ENCODE measurements at regions of chr11 and their contacts with region 1.

Region 1: GRCh38 chr11:2532704-2533586 is 88.1 kb downstream of the KCNQ1 start:
- DNase-seq: peak; percentile 90
- H3K4me3 Mint-ChIP-seq: peak overlapping the region; percentile 49
- H3K27ac Mint-ChIP-seq: no peak overlapping the region
- H3K4me1 Mint-ChIP-seq: peaks cover 13% of the 10 kb centered on the region
- H3K27me3 Mint-ChIP-seq: no peaks in the 10 kb centered on the region

Region 2: GRCh38 chr11:2428322-2428795 is 104.6 kb before region 1 on chr11:
- CTCF ChIA-PET with region 1: interaction called, 33 read pairs
- POLR2A ChIA-PET with region 1: interaction called, 3 read pairs
- DNase-seq: peak; percentile 83
- H3K4me3 Mint-ChIP-seq: no peak overlapping the region
- H3K27ac Mint-ChIP-seq: no peak overlapping the region
- H3K4me1 Mint-ChIP-seq: no peaks in the 10 kb centered on the region
- H3K27me3 Mint-ChIP-seq: no peaks in the 10 kb centered on the region

Region 3: GRCh38 chr11:2666401-2666741 is 133.4 kb after region 1 on chr11:
- CTCF ChIA-PET with region 1: no interaction called
- POLR2A ChIA-PET with region 1: no interaction called
- DNase-seq: no peak
- H3K4me3 Mint-ChIP-seq: no peak overlapping the region
- H3K27ac Mint-ChIP-seq: no peak overlapping the region
- H3K4me1 Mint-ChIP-seq: no peaks in the 10 kb centered on the region
- H3K27me3 Mint-ChIP-seq: no peaks in the 10 kb centered on the region

Region 4: DNA sequence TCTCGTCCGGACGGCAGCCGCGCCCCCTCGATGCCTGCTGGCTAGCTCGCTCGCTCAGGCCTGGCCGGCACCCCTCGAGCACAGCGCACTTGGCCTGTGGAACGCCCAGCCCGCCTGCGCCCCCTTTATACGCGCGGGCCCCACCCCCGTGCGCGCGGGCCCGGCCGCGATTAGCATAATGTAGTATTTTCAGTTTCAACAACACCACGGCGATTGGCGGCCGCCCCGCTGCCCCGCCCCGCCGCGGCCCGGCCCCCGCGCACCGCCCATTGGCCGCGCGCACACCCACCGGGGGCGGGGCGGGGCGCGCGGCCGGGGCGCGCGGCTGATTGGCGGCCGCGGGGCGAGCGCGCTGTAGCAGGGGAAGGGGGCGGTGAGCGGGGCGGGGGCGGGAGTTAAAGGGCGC is 352.7 kb after region 1 on chr11 and contains the start of gene CDKN1C:
- CTCF ChIA-PET with region 1: interaction called, 216 read pairs
- POLR2A ChIA-PET with region 1: interaction called, 10 read pairs
- DNase-seq: peak; percentile 84
- H3K4me3 Mint-ChIP-seq: peak within 1 kb of the TSS; percentile 84
- H3K27ac Mint-ChIP-seq: no peak within 1 kb of the TSS
- H3K4me1 Mint-ChIP-seq: peaks cover 11% of the 10 kb centered on the region
- H3K27me3 Mint-ChIP-seq: peaks cover 38% of the 10 kb centered on the region
- total RNA-seq, gene CDKN1C: 0.55 to 0.60 TPM

Region 5: DNA sequence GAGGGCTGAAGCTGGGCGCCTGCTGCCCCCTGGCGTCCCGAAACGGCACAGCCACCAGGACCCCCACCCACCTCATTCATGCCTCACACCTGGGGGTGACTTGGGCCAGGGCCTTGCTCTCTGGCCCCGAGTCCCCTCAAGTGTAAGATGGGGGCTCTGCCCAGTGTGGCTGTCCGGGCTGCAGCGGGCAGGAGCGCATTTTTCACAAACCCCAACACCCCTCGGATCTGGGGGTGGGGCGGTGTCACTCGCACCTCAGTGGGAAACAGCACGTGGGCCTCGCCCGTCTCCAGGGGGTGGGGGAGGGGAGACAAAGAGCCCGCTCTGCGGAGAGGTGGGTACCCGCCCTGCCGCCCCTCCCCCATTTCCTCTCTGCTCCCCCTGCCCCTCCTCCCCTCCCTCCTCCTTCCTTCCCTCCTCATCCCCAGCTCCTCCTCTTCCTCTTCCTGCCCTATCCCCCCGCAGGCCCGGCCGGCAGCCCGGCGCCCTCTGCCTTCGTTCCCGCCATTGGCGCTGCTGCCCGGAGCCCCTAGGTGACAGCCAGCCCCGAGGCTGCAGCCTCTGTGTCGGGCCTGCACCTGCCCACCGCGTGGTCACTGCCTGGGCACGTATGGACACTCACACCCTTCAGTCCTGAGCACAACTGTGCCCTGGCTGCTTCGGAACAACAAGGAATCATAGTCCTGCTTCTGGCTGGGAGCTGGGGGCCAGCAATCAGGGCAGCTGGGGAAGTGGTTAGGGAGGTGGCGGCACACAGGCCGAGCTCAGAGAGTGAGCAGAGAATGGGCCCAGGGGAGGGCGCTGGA is 359.5 kb after region 1 on chr11:
- CTCF ChIA-PET with region 1: interaction called, 216 read pairs
- POLR2A ChIA-PET with region 1: interaction called, 17 read pairs
- DNase-seq: peak; percentile 76
- H3K4me3 Mint-ChIP-seq: peak overlapping the region; percentile 79
- H3K27ac Mint-ChIP-seq: peak overlapping the region; percentile 80
- H3K4me1 Mint-ChIP-seq: peaks cover 23% of the 10 kb centered on the region
- H3K27me3 Mint-ChIP-seq: peaks cover 3% of the 10 kb centered on the region

Region 6: DNA sequence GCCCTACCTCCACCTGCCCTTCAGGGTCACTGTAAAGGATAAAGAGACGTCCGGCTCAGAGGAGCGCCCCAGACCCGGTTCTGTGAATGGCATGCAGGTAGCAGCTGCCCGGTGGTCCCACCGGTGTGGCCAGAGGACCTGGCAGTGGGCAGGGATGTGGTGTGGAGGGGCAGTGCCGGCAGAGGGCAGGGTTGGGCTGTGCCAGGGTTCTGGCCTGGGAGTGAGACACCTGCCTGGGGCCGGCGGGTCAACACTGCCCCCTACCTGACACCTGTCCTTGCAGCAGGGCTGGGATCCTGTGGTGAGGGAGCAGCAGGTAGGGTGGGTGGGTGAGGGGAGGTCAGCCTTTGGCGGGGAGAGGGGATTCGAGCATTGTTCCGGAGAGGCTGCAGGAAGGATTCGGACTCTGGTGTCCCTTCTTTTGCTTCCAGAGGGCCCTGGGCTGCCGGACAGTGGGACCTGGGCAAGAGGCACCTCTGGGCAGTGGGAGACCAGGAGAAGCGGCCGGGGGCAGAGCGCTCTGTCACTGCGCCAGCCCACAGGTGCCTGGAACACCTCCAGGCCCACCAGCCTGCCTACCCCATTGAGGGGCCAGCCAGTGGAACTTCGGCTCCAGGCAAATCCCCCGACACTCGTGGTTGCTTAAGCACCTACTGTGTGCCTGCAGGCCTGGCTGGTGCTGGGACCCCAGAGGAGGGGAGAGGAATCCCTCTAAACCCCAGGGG is 397.9 kb after region 1 on chr11:
- CTCF ChIA-PET with region 1: interaction called, 10 read pairs
- POLR2A ChIA-PET with region 1: no interaction called
- DNase-seq: peak; percentile 66
- H3K4me3 Mint-ChIP-seq: peak overlapping the region; percentile 73
- H3K27ac Mint-ChIP-seq: peak overlapping the region; percentile 57
- H3K4me1 Mint-ChIP-seq: peaks cover 43% of the 10 kb centered on the region
- H3K27me3 Mint-ChIP-seq: peaks cover 22% of the 10 kb centered on the region